Common myeloid progenitor, CD34-positive (primary cell): ENCODE measurements at regions of chr10 and their contacts with region 1.

Region 1: GRCh38 chr10:17368708-17369272 is 85.6 kb downstream of the ST8SIA6 start:
- DNase-seq: no peak
- H3K4me3 ChIP-seq: no peak overlapping the region
- H3K27ac ChIP-seq: no peak overlapping the region
- H3K4me1 ChIP-seq: no peaks in the 10 kb centered on the region
- H3K27me3 ChIP-seq: no peaks in the 10 kb centered on the region

Region 2: DNA sequence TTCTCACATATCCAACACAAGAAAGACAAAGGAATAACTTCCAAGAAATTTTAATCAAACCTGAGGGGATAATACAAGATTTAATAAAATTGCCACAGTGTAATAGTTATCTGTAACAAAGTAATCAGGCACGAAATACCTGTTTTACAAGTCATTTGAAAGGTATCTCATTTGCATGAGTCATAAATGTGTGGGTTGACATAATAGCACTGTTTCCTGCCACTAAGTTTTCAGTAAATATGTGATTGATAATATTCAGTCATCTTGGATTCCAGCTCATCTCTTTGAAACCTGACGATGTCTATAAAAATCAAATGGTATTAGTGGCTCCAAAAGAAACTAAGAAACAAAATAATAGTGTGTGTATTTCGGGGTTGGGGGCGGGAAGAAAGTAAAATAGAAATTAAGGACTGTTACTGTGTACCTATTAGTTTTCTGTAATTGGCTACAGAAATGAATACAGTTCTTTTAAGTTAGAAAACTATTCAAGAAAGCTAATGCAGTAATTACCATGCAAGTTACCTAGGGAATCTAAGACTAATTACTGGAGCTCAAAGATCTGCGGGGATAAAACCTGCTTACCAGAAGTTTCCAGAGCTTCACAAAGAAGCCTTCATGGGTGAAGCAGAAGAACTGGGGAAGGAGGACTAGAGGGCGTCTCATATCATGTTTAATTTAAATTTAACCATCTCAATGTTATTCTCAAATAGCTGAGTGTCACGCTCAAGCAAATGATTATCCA is 15.1 kb before region 1 on chr10:
- CTCF ChIA-PET with region 1: interaction called, 13 read pairs
- POLR2A ChIA-PET with region 1: no interaction called
- DNase-seq: no peak
- H3K4me3 ChIP-seq: no peak overlapping the region
- H3K27ac ChIP-seq: no peak overlapping the region
- H3K4me1 ChIP-seq: no peaks in the 10 kb centered on the region
- H3K27me3 ChIP-seq: no peaks in the 10 kb centered on the region